Activated naive CD4-positive, alpha-beta T cell treated with anti-CD3 and anti-CD28 coated beads, Interleukin-2, amount 10 ng/mL, durations not matched to agents 7 days and 5 days (primary cell): ENCODE measurements at regions of chr5 and their contacts with region 1.

Region 1: GRCh38 chr5:72366324-72366976 is 46.3 kb downstream of the PTCD2 start:
- DNase-seq: peak; percentile 58
- H3K4me3 Mint-ChIP-seq: no peak overlapping the region
- H3K27ac Mint-ChIP-seq: no peak overlapping the region
- H3K4me1 Mint-ChIP-seq: no peaks in the 10 kb centered on the region
- H3K27me3 Mint-ChIP-seq: no peaks in the 10 kb centered on the region

Region 2: DNA sequence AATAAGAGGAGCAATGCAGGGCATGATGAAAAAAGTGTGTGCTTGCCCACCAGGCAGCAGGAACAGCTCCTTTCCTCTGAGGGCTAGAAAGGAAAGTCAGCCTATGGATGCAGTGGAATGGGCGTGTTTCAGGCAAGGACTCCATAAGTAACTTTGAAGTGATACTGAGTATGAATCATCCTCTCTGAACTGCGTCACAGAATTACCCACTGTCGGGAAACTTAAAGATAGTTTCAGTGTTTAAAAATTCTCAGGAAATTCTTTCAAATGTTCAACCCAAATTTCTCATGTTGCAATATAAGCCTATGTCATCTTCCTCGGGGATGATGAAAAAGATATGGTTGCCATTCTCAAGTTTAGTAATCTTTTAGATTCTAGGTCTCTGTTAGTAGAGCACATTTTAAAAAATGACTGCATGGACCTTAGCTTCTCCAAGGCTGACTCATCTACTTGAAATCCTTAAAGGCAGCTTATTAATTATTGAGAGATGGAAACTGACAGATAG is 18.6 kb before region 1 on chr5:
- CTCF ChIA-PET with region 1: no interaction called
- DNase-seq: no peak
- H3K4me3 Mint-ChIP-seq: no peak overlapping the region
- H3K27ac Mint-ChIP-seq: no peak overlapping the region
- H3K4me1 Mint-ChIP-seq: peaks cover 12% of the 10 kb centered on the region
- H3K27me3 Mint-ChIP-seq: no peaks in the 10 kb centered on the region

Region 3: GRCh38 chr5:72523960-72524582 is 157.6 kb after region 1 on chr5:
- CTCF ChIA-PET with region 1: interaction called, 26 read pairs
- DNase-seq: no peak
- H3K4me3 Mint-ChIP-seq: no peak overlapping the region
- H3K27ac Mint-ChIP-seq: no peak overlapping the region
- H3K4me1 Mint-ChIP-seq: no peaks in the 10 kb centered on the region
- H3K27me3 Mint-ChIP-seq: peaks cover 3% of the 10 kb centered on the region

Region 4: DNA sequence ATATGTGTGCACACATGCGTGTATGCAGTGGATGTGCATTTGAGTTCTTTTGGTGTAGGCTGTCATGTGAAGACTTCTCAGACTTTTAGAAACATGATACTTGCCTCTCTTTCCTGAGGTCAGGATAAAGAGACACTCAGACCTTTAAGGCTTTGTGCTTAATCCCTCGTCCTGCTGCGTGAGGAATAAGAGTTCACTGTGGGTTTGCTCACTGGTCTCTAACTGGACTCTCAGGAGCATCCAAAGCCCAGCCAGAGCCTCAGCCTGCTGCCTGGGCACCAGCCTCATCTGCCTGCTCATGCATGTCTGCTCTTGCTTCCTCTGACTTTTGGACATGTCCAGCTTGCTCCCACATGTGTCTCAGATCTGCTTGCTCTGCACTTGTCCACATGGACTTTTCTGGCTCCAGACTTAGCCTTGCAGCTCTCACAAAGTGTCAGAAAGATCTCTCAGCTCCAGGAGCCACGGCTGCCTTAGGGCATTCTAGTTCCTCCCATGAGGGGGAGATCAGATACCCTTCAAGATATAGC is 205.9 kb after region 1 on chr5:
- CTCF ChIA-PET with region 1: no interaction called
- DNase-seq: no peak
- H3K4me3 Mint-ChIP-seq: no peak overlapping the region
- H3K27ac Mint-ChIP-seq: no peak overlapping the region
- H3K4me1 Mint-ChIP-seq: no peaks in the 10 kb centered on the region
- H3K27me3 Mint-ChIP-seq: peaks cover 23% of the 10 kb centered on the region